SK-N-SH (cell line): ENCODE measurements at regions of chr11 and their contacts with region 1.

Region 1: GRCh38 chr11:1832211-1832919 is 2.4 kb upstream of the SYT8 start:
- DNase-seq: peak; percentile 95
- H3K4me3 ChIP-seq: no peak overlapping the region; a peak in 1 of 4 replicates
- H3K27ac ChIP-seq: no peak overlapping the region; a peak in 1 of 4 replicates
- H3K4me1 ChIP-seq: peaks cover 6 to 65% of the 10 kb centered on the region in 2 experiments; a peak in 3 of 4 replicates
- H3K27me3 ChIP-seq: no peaks in the 10 kb centered on the region
- CTCF ChIP-seq: peak; percentile 91
- EP300 ChIP-seq: no peak
- RAD21 ChIP-seq: peak; percentile 75

Region 2: GRCh38 chr11:1640076-1640946 is 192.1 kb before region 1 on chr11:
- CTCF ChIA-PET with region 1: interaction called, 38 read pairs
- POLR2A ChIA-PET with region 1: no interaction called
- DNase-seq: peak; percentile 86
- H3K4me3 ChIP-seq: no peak overlapping the region; a peak in 1 of 4 replicates
- H3K27ac ChIP-seq: no peak overlapping the region; a peak in 1 of 4 replicates
- H3K4me1 ChIP-seq: peaks cover 0 to 25% of the 10 kb centered on the region in 2 experiments; a peak in 1 of 4 replicates
- H3K27me3 ChIP-seq: no peaks in the 10 kb centered on the region
- CTCF ChIP-seq: peak; percentile 82
- EP300 ChIP-seq: no peak
- RAD21 ChIP-seq: peak; percentile 14; the same call in 1 of the 2 replicates

Region 3: GRCh38 chr11:1706634-1707400 is 125.5 kb before region 1 on chr11:
- CTCF ChIA-PET with region 1: interaction called, 72 read pairs
- POLR2A ChIA-PET with region 1: no interaction called
- DNase-seq: no peak
- H3K4me3 ChIP-seq: no peak overlapping the region
- H3K27ac ChIP-seq: no peak overlapping the region
- H3K4me1 ChIP-seq: no peaks in the 10 kb centered on the region; a peak in 1 of 4 replicates
- H3K27me3 ChIP-seq: no peaks in the 10 kb centered on the region; the same call in 1 of the 2 replicates
- CTCF ChIP-seq: no peak
- EP300 ChIP-seq: no peak
- RAD21 ChIP-seq: peak; percentile 22; the same call in 1 of the 2 replicates

Region 4: DNA sequence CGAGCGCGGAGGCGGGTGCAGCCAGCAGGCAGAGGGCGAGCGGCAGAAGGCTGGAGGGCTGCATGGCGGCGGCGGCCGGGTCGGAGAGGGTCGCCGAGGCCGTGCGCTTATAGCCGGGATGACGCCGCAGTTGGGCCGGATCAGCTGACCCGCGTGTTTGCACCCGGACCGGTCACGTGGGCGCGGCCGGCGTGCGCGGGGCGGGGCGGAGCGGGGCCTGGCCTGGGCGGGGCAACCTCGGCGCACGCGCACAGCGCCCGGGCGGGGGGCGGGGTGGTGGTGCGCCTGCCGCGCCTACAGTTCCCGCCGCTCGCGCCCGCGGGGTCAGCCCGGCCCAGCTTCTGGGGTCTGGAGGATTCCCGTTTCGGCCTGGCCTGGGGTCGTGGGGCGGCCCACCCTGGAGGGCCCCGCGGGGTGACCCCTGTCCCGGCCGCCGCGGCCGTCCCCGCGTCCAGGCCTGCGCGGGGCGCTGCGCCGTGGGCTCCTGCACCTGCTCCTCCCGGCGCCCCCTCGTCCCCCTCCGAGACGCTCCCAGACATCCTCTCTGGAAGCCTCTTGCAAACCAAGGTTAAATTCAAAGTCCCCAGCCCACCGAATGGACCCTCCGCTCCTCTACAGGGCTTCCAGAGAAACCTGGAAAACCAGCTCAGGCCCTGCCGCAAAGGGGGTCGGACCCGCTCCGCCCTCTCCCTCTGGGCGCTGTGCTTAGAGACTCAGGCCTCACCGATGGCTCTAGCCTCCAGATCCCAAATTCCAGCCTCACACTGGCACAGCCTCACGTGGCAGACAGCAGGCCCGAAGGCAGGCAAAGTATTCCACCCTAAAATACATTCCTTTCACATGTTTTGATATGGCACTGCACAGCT is 68.3 kb before region 1 on chr11 and contains the start of gene CTSD:
- CTCF ChIA-PET with region 1: interaction called, 12 read pairs
- POLR2A ChIA-PET with region 1: no interaction called
- DNase-seq: peak; percentile 100
- H3K4me3 ChIP-seq: peak within 1 kb of the TSS; percentile 92 to 94
- H3K27ac ChIP-seq: peak within 1 kb of the TSS in 1 of 2 experiments; percentile 81; a peak in 2 of 4 replicates
- H3K4me1 ChIP-seq: peaks cover 4 to 19% of the 10 kb centered on the region in 2 experiments; a peak in 3 of 4 replicates
- H3K27me3 ChIP-seq: no peaks in the 10 kb centered on the region
- CTCF ChIP-seq: peak; percentile 31
- EP300 ChIP-seq: no peak
- RAD21 ChIP-seq: no peak
- polyA plus RNA-seq, gene CTSD: 93.0 and 187 TPM in 2 replicates

Region 5: DNA sequence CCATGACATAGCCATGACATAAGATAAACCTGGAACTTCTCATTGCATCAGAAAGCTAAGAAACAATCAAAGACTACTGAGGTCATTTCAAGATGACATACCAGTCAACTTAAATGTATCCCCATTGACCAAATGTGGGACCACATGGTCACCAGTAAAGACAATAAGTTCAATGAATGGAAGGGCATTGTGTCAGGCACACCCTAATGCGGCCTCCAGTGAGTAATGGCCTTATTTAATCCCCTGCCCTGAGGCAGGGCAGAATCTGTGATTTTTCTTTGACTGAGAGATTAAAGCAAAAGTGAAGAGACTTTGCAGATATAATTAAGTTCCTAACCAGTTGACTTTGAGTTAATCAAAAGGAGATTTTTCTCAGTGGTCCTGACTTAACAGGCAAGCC is 14.9 kb before region 1 on chr11:
- CTCF ChIA-PET with region 1: interaction called, 17 read pairs
- POLR2A ChIA-PET with region 1: no interaction called
- DNase-seq: no peak
- H3K4me3 ChIP-seq: no peak overlapping the region
- H3K27ac ChIP-seq: no peak overlapping the region
- H3K4me1 ChIP-seq: no peaks in the 10 kb centered on the region
- H3K27me3 ChIP-seq: no peaks in the 10 kb centered on the region; the same call in 1 of the 2 replicates
- CTCF ChIP-seq: no peak
- EP300 ChIP-seq: no peak
- RAD21 ChIP-seq: no peak

Region 6: DNA sequence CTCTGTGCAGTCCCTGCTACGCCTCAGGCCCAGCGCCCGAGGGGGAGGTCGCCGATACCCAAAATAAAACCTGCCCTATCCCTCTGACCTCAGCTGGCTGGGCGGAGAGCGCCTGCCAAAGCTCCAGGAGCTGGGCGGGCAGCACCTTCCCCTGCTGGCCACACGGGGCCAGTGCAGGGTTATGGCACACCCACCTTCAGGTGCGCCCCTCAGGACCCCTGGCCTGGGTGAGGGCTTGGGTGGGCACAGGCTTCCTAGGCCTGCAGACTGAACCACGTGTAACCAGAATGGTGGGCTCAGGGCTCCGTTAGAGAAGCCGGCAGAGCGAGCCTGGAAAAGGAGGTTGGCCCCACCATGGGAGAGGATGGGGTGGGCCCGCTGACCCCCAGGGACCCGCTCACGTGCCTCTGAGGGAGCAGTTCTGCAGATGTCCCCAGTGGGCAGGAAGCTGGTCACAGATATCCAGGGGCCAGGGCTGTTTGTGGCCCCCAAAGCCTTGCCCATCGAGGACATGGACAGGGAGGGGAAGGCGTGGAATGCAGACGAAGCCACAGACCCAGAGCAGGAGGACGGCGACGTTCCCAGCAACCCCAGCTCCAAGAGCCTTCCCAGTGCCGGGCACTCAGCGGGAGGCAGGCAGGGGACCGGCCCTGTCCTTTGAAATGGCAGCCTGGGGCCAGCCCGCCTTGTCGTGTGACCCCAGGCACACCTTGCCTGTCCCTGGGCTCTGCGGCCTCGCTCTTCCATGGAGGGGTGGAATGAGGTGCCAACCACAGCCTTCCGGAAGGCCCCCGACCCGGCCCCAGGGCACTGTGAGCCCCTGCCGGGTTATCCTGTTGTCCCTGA is 85.5 kb after region 1 on chr11:
- CTCF ChIA-PET with region 1: interaction called, 14 read pairs
- POLR2A ChIA-PET with region 1: no interaction called
- DNase-seq: peak; percentile 59
- H3K4me3 ChIP-seq: no peak overlapping the region
- H3K27ac ChIP-seq: no peak overlapping the region
- H3K4me1 ChIP-seq: peaks cover 0 to 21% of the 10 kb centered on the region in 2 experiments; a peak in 1 of 4 replicates
- H3K27me3 ChIP-seq: no peaks in the 10 kb centered on the region
- CTCF ChIP-seq: peak; percentile 41; the same call in 1 of the 2 replicates
- EP300 ChIP-seq: no peak
- RAD21 ChIP-seq: no peak

Region 7: DNA sequence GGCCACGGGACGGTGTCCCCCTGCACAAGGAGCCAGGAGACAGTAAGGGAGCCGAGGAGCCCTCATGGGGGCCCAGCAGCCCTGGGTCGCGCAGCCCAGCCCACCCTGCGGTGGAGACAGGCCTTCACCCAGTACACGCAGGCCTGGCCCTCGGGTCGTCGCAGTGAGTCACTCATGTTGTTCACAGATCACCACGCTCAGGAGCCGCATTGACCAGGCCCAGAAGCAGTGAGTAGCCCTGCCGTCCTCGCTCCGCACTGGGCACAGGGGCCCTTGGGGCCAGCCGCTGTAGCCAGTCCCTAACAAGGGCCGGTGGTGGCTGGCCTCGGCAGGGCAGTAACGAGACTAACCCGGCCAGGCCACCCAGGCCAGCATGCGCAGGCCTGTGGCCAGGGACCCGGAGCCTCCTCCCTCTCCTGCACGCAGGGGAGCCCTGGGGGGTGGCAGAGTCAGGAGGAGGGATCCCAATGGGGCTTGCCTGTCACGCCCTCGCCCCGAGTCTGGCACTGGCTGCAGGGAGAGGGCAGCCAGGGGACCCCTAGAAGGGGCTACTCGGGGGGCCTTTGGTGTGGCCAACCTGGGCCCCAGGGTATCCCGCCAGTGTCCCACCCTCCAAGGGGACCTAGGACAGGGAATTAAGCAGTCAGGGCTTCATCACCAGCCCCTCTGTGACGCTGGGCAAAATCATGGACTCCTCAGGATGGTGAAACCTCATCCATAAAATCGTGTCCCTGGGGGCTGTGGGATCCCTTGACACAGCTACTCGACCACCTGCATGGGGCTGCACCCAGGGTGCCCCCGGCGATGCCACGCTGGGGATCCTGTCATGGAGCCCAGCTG is 104.6 kb after region 1 on chr11:
- CTCF ChIA-PET with region 1: no interaction called
- POLR2A ChIA-PET with region 1: no interaction called
- DNase-seq: peak; percentile 35
- H3K4me3 ChIP-seq: no peak overlapping the region
- H3K27ac ChIP-seq: no peak overlapping the region
- H3K4me1 ChIP-seq: peaks cover 0 to 10% of the 10 kb centered on the region in 2 experiments; a peak in 1 of 4 replicates
- H3K27me3 ChIP-seq: no peaks in the 10 kb centered on the region
- CTCF ChIP-seq: no peak
- EP300 ChIP-seq: no peak
- RAD21 ChIP-seq: no peak

Region 8: DNA sequence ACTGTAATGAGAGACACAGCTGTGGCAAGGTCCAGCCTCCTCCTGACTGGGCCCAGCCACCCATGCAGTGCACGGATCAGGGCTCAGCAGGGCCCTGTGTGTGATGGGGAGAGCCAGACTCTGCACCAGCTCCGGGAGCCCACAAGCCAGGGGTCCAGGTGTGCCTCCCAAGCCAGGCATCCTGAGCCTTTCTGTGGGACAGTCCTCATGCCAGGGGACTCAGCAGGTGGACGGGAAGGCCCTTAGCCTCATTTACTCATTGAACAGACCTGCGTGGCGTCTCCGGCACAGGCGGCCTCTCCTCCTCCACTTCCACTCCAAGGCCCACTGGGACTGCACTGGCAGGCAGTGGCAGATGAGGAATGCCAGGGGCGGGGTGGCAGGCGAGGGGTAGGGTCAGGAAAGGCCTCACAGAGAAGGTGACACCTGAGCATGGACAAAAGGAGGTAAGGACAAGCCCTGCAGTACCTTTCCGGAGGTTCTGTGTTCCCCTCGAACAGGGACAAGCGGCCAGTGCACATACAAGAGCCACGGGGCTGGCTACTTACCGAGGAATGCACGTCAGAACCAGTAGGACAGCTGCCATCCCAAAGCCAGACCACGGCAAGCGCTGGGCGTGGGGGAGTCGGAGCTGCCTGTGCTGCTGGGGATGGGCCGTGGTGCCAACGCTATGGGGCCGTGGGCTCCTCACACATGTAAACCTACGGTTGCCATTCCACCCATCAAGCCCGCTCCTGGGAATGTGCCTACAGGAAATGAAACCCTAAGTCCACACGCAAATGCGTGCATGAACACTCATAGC is 254.1 kb after region 1 on chr11:
- CTCF ChIA-PET with region 1: no interaction called
- POLR2A ChIA-PET with region 1: no interaction called
- DNase-seq: no peak
- H3K4me3 ChIP-seq: no peak overlapping the region
- H3K27ac ChIP-seq: no peak overlapping the region
- H3K4me1 ChIP-seq: no peaks in the 10 kb centered on the region; a peak in 1 of 4 replicates
- H3K27me3 ChIP-seq: no peaks in the 10 kb centered on the region
- CTCF ChIP-seq: no peak
- EP300 ChIP-seq: no peak
- RAD21 ChIP-seq: no peak